ENCODE measurements at regions of chr12 and their contacts with region 1.

Region 1: DNA sequence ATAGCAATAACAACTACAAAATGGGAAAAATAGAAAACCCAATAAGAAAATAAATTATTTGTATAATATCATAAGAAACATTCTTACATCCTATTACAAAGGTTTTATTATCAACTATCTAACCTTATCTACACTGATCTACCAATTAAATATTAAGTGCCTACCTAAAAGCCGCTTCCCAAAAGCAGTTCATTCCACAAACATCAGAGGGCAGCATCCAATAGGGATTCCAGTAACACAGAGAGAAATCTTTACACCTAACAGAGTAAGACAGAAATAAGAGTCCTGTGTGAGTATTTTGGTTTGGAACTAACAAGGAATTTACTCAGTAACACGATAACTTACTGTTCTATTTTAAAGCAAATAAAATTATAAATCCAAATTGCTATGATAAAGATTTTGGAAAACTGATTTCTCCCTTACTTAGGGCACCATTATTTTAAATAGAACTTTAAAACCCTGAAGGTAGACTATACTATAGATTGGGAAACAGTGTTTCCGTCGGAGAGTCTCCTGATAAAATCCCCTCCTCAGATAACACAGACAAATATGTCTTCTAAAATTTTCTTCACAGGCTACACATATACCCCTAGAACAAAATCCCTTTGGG is 15.0 kb downstream of the GXYLT1 start:
- DNase-seq: peak; percentile 63 to 75
- H3K4me3 ChIP-seq: no peak overlapping the region
- H3K4me3 Mint-ChIP-seq: no peak overlapping the region
- H3K27ac Mint-ChIP-seq: no peak overlapping the region
- H3K4me1 ChIP-seq: peaks cover 43% of the 10 kb centered on the region
- H3K4me1 Mint-ChIP-seq: no peaks in the 10 kb centered on the region
- H3K27me3 ChIP-seq: no peaks in the 10 kb centered on the region
- H3K27me3 Mint-ChIP-seq: no peaks in the 10 kb centered on the region
- CTCF ChIP-seq: peak; percentile 74 to 91

Region 2: DNA sequence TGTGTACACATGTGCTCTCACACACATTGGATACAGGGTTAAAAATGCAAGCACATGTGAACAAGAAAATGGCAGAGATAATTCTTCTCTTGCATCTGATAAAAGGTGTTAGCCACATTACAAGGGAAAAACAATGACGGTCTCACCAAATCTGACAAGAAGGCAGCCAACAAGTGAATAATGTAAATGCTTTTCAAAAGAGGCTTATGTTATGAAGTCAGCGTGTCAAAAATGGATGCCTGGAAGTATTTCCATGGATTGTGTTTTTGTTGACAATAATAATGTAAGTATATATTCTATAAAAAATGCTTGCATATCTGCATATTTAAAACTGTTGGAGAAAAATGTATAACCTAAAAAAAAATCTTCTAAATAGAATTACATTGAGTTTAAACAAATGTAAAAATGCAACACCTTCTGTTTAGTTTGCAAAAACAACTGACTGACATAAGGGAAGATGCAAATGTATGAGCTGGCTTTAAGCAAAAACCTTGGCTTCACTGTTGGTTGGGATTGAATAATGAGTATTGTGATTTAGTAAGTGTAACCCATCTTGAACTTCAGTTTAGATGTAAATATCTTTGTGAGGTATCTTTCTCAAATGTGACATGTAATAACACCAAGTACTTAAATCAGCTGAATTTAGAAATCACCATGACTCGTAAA is 516.7 kb before region 1 on chr12:
- CTCF ChIA-PET with region 1: no interaction called
- POLR2A ChIA-PET with region 1: no interaction called
- intact Hi-C with region 1: no loop called
- DNase-seq: no peak
- H3K4me3 ChIP-seq: no peak overlapping the region
- H3K4me3 Mint-ChIP-seq: no peak overlapping the region
- H3K27ac Mint-ChIP-seq: no peak overlapping the region
- H3K4me1 ChIP-seq: no peaks in the 10 kb centered on the region
- H3K4me1 Mint-ChIP-seq: no peaks in the 10 kb centered on the region
- H3K27me3 ChIP-seq: no peaks in the 10 kb centered on the region
- H3K27me3 Mint-ChIP-seq: peaks cover 2% of the 10 kb centered on the region
- CTCF ChIP-seq: no peak

Region 3: DNA sequence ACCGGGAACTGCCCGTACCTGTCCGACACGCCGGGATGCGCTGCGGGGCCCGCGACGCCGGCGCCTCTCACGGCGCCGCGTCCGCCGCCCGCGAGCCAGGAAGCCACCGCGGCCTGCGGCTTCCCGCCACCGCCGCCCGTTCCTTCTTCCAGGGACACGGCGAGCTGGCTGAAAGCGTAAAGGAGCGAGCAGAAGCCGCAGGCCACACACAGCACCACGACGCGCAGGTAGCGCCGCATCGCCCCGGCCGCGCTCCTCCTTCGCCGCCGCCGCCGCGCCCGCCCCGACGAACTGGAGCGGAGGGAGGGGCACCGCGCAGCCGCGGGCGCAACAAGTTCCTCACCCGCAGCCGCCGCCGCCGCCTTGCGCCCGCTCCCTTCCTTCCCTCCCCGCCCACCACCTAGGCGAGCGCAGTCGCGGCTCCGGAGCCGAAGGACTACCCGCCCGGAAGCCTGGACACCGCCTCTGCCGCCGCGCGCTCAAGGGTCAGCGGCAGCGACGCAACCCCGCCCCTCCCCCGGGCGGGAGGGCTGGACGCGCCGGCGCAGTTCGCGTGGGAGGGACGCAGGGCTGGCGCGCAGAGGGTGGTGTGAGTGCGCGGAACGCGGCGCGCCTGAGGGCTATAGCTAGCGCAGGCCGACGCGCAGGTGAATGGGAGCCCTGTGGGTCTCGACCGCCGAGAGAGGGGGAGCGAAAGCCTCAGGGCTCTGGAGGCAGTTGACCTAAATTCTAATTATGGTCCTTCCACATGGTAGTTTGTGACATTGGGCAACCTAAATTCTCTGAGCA is 14.9 kb after region 1 on chr12 and contains the start of gene GXYLT1:
- CTCF ChIA-PET with region 1: no interaction called
- POLR2A ChIA-PET with region 1: no interaction called
- intact Hi-C with region 1: loop called (anchors 1 kb)
- DNase-seq: peak; percentile 97 to 98
- H3K4me3 ChIP-seq: peak within 1 kb of the TSS; percentile 69
- H3K4me3 Mint-ChIP-seq: peak within 1 kb of the TSS; percentile 82
- H3K27ac Mint-ChIP-seq: peak within 1 kb of the TSS; percentile 84
- H3K4me1 ChIP-seq: peaks cover 31% of the 10 kb centered on the region
- H3K4me1 Mint-ChIP-seq: peaks cover 35% of the 10 kb centered on the region
- H3K27me3 ChIP-seq: no peaks in the 10 kb centered on the region
- H3K27me3 Mint-ChIP-seq: no peaks in the 10 kb centered on the region
- CTCF ChIP-seq: no peak
- total RNA-seq, gene GXYLT1: 25.7 and 28.1 TPM in 2 replicates

Region 4: DNA sequence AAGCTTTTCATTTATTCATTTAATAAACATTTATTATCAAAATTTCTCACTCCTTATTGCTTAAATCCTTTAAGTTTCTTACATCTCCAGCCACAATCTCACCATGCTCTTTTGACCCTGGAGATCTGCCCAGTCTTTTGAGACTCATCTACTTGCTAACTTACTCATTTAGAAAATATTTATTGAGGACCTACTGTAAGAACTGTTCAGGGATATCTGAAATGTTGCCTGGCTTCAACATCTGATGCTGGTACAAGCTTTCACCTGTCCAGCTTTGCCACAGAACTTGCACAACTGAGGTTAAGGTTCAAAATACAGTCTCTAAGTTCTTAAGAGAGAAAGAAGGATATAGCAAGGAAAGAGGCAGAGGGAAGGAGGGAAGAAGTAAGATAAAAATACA is 32.5 kb after region 1 on chr12:
- CTCF ChIA-PET with region 1: no interaction called
- POLR2A ChIA-PET with region 1: no interaction called
- intact Hi-C with region 1: no loop called
- DNase-seq: no peak
- H3K4me3 ChIP-seq: no peak overlapping the region
- H3K4me3 Mint-ChIP-seq: no peak overlapping the region
- H3K27ac Mint-ChIP-seq: no peak overlapping the region
- H3K4me1 ChIP-seq: peaks cover 17% of the 10 kb centered on the region
- H3K4me1 Mint-ChIP-seq: peaks cover 14% of the 10 kb centered on the region
- H3K27me3 ChIP-seq: no peaks in the 10 kb centered on the region
- H3K27me3 Mint-ChIP-seq: no peaks in the 10 kb centered on the region
- CTCF ChIP-seq: no peak

Region 5: GRCh38 chr12:42237052-42237852 is 107.6 kb after region 1 on chr12:
- CTCF ChIA-PET with region 1: no interaction called
- POLR2A ChIA-PET with region 1: no interaction called
- intact Hi-C with region 1: loop called (anchors 5 kb)
- DNase-seq: peak; percentile 82 to 84
- H3K4me3 ChIP-seq: peak overlapping the region; percentile 83
- H3K4me3 Mint-ChIP-seq: peak overlapping the region; percentile 75
- H3K27ac Mint-ChIP-seq: peak overlapping the region; percentile 33
- H3K4me1 ChIP-seq: peaks cover 9% of the 10 kb centered on the region
- H3K4me1 Mint-ChIP-seq: peaks cover 9% of the 10 kb centered on the region
- H3K27me3 ChIP-seq: no peaks in the 10 kb centered on the region
- H3K27me3 Mint-ChIP-seq: no peaks in the 10 kb centered on the region
- CTCF ChIP-seq: peak; percentile 9 to 33

Region 6: DNA sequence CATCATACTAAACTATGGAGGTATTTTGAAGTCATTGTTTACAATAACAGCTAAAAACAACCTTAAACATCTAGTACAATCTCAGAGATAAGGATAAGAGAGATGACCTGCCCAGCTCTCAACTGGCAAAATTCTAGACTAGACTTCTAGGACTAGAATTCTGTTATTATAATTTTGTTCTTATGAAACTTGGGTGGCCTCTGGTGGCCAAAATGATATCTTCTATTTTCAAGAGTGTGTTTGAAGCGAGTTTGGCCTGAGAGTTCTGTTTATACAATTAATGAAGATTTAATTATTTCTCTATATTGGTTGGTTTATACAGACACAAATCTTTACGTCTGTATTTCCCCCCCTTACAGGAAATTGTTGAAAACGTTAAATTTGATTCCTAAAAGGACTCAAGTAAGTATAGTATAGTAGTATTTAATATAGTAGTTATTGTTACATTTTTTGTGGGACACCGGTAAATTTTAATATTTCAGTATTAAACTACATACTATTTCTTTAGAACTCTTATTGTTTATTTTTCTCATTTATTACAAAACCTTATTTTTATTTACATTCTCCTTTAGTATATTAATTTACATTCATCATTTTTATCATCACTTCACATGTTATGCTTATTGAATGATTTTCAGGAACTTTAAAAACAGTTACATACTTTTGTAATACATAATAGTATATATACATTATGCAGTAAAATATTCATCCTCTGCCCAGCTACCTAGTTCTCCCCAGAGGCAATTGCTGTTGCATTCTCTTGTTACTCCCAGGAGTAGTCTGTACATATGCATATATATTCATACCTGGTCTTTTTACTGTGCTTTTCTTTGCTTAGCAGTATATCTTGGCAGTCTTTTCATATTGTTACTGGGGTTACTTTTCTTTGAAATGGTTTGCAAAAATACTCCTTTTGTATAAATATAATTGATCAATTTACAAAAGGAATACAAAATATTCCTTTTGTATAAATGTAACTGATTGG is 202.9 kb after region 1 on chr12:
- CTCF ChIA-PET with region 1: interaction called, 3 read pairs
- POLR2A ChIA-PET with region 1: no interaction called
- intact Hi-C with region 1: loop called (anchors 1 kb)
- DNase-seq: peak in 1 of 2 experiments; percentile 55
- H3K4me3 ChIP-seq: no peak overlapping the region
- H3K4me3 Mint-ChIP-seq: no peak overlapping the region
- H3K27ac Mint-ChIP-seq: no peak overlapping the region
- H3K4me1 ChIP-seq: peaks cover under 1% of the 10 kb centered on the region; the same call in 1 of the 2 replicates
- H3K4me1 Mint-ChIP-seq: peaks cover 13% of the 10 kb centered on the region
- H3K27me3 ChIP-seq: no peaks in the 10 kb centered on the region
- H3K27me3 Mint-ChIP-seq: no peaks in the 10 kb centered on the region
- CTCF ChIP-seq: peak; percentile 62 to 67

Region 7: DNA sequence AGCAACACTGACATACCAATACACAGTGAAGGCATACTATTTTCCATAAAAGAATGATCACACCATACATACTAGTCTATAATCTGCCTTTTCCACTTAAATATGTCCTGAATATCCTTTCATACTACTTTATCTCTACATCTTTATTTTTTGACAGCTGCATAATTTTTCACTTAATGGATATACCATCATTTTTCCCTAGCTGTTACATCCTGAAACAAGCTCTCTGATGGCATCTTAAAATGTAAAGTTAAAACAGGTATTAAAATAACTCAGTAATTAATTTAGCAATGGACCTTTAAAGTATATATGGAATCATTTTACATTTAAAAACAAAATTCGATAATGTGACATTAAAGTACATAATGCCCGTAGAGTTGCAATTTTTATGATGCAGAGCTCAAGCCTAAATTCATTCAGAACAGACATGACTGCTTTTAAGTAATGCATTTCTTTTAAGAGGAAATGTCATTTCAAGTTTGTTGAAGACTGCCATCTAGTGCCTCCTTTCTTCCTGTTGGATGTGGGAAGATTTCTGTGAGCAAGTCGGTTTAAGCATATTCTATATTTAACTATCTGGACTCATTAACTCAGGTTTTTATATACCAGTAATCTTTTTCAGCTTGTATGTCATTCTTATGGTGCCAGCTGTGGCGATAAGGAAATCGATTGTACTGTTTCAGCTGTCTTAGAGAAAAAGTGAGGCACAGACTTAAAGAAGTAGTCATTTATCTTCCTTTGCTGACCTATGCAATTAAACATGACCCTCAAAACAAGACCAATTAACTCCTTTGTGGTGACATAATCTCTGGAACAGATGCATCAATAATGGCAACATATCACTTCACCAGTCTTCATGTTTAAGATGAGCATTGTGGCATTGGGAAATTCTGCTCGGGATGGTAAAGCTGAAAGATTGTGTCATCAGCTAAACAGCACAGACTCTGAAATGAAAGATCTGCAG is 439.5 kb after region 1 on chr12:
- CTCF ChIA-PET with region 1: no interaction called
- POLR2A ChIA-PET with region 1: no interaction called
- intact Hi-C with region 1: loop called (anchors 1 kb)
- DNase-seq: peak in 1 of 2 experiments; percentile 56
- H3K4me3 ChIP-seq: no peak overlapping the region
- H3K4me3 Mint-ChIP-seq: no peak overlapping the region
- H3K27ac Mint-ChIP-seq: no peak overlapping the region
- H3K4me1 ChIP-seq: peaks cover 17% of the 10 kb centered on the region
- H3K4me1 Mint-ChIP-seq: peaks cover 7% of the 10 kb centered on the region
- H3K27me3 ChIP-seq: no peaks in the 10 kb centered on the region
- H3K27me3 Mint-ChIP-seq: no peaks in the 10 kb centered on the region
- CTCF ChIP-seq: peak; percentile 47 to 63

Measured in Caco-2 (cell line).